ENCODE measurements at regions of chr6 and their contacts with region 1.

Region 1: DNA sequence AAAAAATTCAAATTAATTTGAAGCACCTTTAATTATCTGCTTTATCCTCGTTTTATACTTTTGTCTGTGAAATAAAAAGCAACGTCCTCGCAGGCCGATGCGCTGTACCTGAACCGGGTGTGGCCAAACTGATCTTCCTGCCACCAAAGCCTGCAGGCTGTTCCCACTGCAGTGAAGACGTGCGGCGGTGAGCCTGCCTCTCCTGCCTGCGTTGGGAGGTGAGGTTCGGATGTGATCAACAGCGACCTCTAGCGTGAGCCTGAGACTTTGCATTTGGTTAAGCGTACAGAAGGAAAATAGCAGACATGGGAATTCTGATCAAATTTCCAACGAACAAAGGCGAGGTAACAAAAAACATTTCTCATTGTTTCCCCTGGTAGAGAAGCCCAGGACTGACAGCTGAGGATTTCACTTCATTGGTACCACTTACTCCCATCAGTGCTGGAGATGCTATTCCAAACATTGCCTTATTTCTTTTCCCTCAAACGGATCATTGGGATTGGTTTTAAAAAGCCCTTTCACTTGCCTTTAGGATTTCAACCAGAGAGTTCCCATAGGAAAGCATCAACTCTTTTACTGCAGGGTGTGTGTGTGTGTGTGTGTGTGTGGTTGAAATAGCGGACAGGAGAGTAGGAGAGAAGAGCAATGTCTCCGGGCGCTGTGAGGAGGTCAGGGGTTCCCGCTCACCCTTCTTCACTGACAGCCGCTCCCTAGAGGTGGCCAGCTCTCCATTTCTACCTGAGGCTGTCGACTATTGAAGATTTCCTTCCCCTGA is 56.6 kb upstream of the CCN6 start:
- DNase-seq: peak; percentile 79 to 82
- H3K4me3 ChIP-seq: no peak overlapping the region
- H3K27ac ChIP-seq: no peak overlapping the region
- H3K4me1 ChIP-seq: peaks cover 22% of the 10 kb centered on the region
- H3K27me3 ChIP-seq: no peaks in the 10 kb centered on the region
- CTCF ChIP-seq: peak; percentile 99

Region 2: GRCh38 chr6:111709615-111710398 is 287.5 kb before region 1 on chr6:
- CTCF ChIA-PET with region 1: no interaction called
- POLR2A ChIA-PET with region 1: no interaction called
- intact Hi-C with region 1: loop called (anchors 1 kb)
- DNase-seq: peak; percentile 54 to 56
- H3K4me3 ChIP-seq: no peak overlapping the region
- H3K27ac ChIP-seq: no peak overlapping the region
- H3K4me1 ChIP-seq: 0 out of 2 replicates have a peak, but pooled peaks cover 5% of the 10 kb centered on the region
- H3K27me3 ChIP-seq: no peaks in the 10 kb centered on the region
- CTCF ChIP-seq: peak; percentile 91

Region 3: DNA sequence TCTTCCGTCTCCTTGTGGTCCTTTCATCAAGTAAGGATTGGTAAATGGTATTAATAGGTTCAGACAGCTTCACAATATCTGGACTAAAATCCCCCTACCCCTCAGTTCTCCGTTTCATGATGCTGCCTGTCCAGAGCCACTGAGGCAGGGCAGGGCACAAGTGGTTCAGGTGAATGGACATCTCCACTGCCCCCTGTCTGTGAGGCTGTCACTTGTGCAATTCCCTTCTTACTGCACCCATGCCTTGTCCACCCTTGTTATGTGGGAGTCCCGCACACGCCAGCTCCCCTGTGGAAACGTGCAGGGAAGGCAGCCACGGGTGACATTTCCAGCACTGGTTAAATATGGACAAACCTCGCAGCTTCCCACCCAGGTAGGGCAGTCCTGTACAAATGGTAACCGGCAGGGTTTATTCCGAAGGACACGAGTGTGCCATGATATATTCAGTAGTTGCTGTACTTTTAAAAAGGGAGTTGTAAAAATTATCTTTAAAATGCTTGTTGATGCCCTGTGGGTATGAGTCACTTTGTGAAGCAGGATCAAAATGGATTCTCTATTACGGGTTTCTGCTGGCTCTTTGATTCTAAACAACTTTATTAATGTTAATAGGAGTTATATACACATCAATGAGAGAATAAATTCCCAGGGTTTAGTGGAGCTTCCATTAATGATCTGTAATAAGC is 197.5 kb before region 1 on chr6:
- CTCF ChIA-PET with region 1: no interaction called
- POLR2A ChIA-PET with region 1: no interaction called
- intact Hi-C with region 1: loop called (anchors 2 kb)
- DNase-seq: no peak
- H3K4me3 ChIP-seq: no peak overlapping the region
- H3K27ac ChIP-seq: peak overlapping the region; percentile 74
- H3K4me1 ChIP-seq: peaks cover 72% of the 10 kb centered on the region
- H3K27me3 ChIP-seq: no peaks in the 10 kb centered on the region
- CTCF ChIP-seq: no peak

Region 4: GRCh38 chr6:111921103-111921502 is 76.2 kb before region 1 on chr6:
- CTCF ChIA-PET with region 1: no interaction called
- POLR2A ChIA-PET with region 1: interaction called, 13 read pairs
- intact Hi-C with region 1: no loop called
- DNase-seq: no peak
- H3K4me3 ChIP-seq: no peak overlapping the region
- H3K27ac ChIP-seq: no peak overlapping the region
- H3K4me1 ChIP-seq: peaks cover 20% of the 10 kb centered on the region
- H3K27me3 ChIP-seq: no peaks in the 10 kb centered on the region
- CTCF ChIP-seq: no peak

Measured in PC-9 (cell line).